ENCODE measurements at regions of chr13 and their contacts with region 1.

Region 1: DNA sequence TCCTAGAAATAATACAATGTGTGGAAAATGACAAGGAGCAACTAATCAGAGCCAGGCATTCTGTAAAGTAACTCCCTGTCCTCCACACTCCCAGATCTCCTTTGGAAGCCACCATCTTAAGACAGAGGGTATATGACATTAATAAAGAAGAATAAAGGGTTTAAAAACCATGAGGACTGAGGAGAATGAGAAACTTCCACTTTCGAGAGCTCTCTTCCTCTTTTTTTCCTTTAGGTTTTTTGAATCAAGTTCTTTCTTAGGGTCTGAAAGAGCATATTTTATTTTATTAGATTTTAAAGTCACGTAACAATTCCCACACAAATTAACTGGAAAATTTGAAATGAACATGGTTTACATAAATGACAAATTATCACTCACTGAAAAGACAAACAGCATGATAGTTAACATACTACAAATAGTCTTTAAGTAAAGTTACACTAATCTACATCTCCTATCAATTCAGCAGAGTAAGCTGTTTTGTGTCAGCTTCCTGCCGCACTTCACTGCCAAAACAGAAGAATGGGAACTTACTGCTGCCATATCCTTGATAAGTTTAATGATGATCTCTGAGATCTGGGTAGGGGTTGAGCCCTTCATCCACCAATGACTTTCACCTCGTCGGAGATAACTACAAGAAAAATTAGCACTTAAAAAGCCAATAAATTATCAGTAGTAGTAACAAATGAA is 38.6 kb upstream of the FBXL3 start:
- DNase-seq: no peak
- ATAC-seq: no peak
- H3K4me3 ChIP-seq: no peak overlapping the region
- H3K4me3 Mint-ChIP-seq: no peak overlapping the region
- H3K27ac ChIP-seq: no peak overlapping the region
- H3K27ac Mint-ChIP-seq: peak overlapping the region; percentile 52
- H3K4me1 ChIP-seq: no peaks in the 10 kb centered on the region
- H3K4me1 Mint-ChIP-seq: no peaks in the 10 kb centered on the region
- H3K27me3 ChIP-seq: no peaks in the 10 kb centered on the region
- H3K27me3 Mint-ChIP-seq: no peaks in the 10 kb centered on the region
- CTCF ChIP-seq: no peak

Region 2: GRCh38 chr13:77079902-77080413 is 14.4 kb after region 1 on chr13:
- CTCF ChIA-PET with region 1: interaction called, 3 read pairs
- POLR2A ChIA-PET with region 1: interaction called, 5 read pairs
- intact Hi-C with region 1: loop called in 1 of 2 experiments (anchors 2 kb)
- DNase-seq: no peak
- ATAC-seq: no peak
- H3K4me3 ChIP-seq: no peak overlapping the region
- H3K4me3 Mint-ChIP-seq: no peak overlapping the region
- H3K27ac ChIP-seq: no peak overlapping the region
- H3K27ac Mint-ChIP-seq: no peak overlapping the region
- H3K4me1 ChIP-seq: no peaks in the 10 kb centered on the region
- H3K4me1 Mint-ChIP-seq: peaks cover 5% of the 10 kb centered on the region
- H3K27me3 ChIP-seq: no peaks in the 10 kb centered on the region
- H3K27me3 Mint-ChIP-seq: no peaks in the 10 kb centered on the region
- CTCF ChIP-seq: no peak